Activated CD4-positive, alpha-beta memory T cell treated with anti-CD3 and anti-CD28 coated beads for 36 hours (primary cell): ENCODE measurements at regions of chr1 and their contacts with region 1.

Region 1: DNA sequence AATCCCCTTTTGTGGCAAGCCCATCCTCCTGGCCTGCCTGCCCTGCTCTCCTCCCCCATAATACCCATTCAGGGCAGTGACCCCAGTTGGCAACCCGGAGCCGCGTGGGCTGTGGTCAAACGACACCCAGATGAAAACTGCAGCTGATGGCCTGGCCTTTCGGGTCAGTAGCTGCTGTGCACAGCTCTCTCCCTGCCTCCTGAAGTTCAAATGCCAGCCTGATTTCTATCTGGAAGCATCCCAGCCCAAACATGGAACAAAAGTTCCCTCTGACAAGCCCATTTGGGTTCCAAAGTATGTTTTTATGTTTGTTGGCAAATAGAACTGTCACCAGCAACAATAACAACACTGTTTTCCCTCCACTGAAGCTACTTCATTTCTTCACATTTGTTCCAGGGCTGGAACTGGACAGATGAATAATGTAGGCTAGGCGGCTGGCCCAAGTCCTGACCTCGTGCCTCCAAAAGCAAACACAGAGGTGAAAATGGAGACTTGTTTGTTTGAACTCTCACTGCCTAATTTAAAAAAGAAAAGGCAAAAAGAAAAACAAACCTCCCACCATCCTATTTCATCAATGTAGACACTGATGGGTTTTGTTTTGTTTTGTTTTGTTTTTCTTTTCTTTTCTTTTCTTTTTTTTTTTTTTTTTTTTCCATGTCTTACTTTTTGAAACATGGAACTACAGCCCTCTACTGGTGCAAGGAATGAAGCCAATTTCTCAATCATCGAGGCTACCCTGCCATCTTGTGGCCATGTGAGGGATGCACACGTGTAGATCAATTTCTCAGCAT is 179.0 kb downstream of the ADSS2 start:
- DNase-seq: peak; percentile 80
- H3K4me3 Mint-ChIP-seq: no peak overlapping the region
- H3K27ac Mint-ChIP-seq: no peak overlapping the region
- H3K4me1 Mint-ChIP-seq: peaks cover 5% of the 10 kb centered on the region
- H3K27me3 Mint-ChIP-seq: peaks cover 1% of the 10 kb centered on the region

Region 2: DNA sequence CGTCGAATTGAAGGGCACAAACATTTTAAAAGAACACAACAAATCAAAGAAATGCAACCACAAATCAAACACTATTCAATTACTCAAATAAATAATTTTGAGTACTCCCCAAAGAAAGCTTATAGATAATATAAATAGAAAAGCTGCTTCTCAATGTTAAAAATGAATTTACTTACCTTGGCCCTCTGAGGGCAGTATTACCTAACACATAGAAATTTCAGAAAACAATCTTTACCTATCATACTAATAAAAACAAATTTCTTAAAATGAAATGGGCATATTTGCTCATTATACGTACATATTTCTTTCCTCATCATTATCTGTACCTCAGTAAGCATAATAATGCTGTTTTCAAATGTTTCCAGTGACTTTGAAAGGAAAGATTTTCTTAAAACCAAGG is 564.5 kb before region 1 on chr1:
- CTCF ChIA-PET with region 1: no interaction called
- POLR2A ChIA-PET with region 1: no interaction called
- intact Hi-C with region 1: loop called (anchors 2 kb)
- DNase-seq: no peak
- H3K4me3 Mint-ChIP-seq: no peak overlapping the region
- H3K27ac Mint-ChIP-seq: no peak overlapping the region
- H3K4me1 Mint-ChIP-seq: peaks cover 15% of the 10 kb centered on the region
- H3K27me3 Mint-ChIP-seq: no peaks in the 10 kb centered on the region

Region 3: DNA sequence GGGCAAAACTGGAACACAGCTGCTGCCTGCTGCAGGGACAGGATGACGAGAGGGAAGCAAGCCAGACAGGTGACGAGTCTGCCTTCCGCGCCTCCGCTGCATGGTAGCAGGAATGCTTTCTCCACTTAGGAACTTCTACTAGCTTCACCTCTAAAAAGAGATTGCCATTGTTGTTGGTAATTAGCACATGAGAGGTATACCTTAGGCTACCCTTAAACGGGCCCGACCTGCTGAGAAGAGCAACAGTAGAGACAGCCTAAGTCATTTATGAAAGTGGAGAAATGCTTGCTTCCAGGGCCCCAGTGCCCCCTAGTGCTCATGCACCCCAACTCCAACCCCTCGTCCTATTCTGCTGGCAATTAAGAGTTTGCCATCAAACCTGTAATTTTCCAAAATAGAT is 325.7 kb before region 1 on chr1:
- CTCF ChIA-PET with region 1: no interaction called
- POLR2A ChIA-PET with region 1: no interaction called
- intact Hi-C with region 1: loop called (anchors 10 kb)
- DNase-seq: peak; percentile 56
- H3K4me3 Mint-ChIP-seq: no peak overlapping the region
- H3K27ac Mint-ChIP-seq: no peak overlapping the region
- H3K4me1 Mint-ChIP-seq: peaks cover 1% of the 10 kb centered on the region
- H3K27me3 Mint-ChIP-seq: peaks cover 5% of the 10 kb centered on the region

Region 4: GRCh38 chr1:244297616-244298015 is 24.9 kb after region 1 on chr1:
- CTCF ChIA-PET with region 1: interaction called, 22 read pairs
- POLR2A ChIA-PET with region 1: no interaction called
- intact Hi-C with region 1: loop called (anchors 1 kb)
- DNase-seq: no peak
- H3K4me3 Mint-ChIP-seq: no peak overlapping the region
- H3K27ac Mint-ChIP-seq: no peak overlapping the region
- H3K4me1 Mint-ChIP-seq: peaks cover 5% of the 10 kb centered on the region
- H3K27me3 Mint-ChIP-seq: no peaks in the 10 kb centered on the region